GM12878 (cell line): ENCODE measurements at regions of chr1 and their contacts with region 1.

Region 1: DNA sequence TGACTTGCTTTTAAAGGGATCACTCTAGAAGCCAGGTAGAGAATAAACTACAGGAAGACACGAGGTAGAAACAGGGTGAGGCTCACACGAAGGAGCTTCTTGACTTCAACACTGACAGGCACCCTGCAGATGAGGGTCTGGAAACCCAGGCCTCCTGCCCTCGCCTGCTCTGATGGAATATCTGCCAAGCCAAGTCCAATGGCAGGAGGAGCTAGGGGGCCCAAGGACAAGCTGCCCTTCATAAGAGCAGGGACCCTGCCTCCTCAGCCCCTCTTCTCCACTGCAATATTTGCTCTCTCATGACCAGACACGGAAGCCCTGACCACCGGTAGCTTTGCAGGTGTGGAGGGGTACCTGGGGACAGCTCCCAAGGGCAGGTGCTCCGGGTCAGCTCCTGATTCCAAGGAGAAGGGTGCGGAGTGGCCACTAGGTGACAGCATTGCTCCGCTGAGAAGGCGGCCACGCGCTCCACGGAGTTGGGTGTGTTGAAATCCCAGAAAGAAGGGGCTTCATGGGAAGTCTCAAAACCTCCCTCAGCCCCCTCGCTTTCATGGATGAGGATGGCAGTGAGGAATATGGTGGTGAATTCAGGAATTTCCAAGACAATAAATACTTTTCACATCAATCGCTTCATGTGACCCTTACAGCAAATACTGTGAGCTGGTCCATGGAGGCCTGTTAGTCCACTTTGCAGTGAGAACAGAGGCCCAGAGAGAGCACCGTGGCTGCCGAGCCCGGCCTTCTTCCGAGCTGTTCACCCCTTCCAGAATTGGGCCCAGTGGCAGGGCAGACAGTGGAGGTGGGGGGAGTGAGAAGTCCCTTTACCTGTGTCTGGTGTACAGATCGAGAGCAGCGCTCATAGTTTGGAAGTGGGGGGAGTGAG is 33.2 kb upstream of the PAX7 start:
- DNase-seq: no peak
- ATAC-seq: peak; percentile 85
- H3K4me3 ChIP-seq: no peak overlapping the region
- H3K27ac ChIP-seq: no peak overlapping the region
- H3K4me1 ChIP-seq: no peaks in the 10 kb centered on the region
- H3K27me3 ChIP-seq: no peaks in the 10 kb centered on the region; a peak in 1 of 4 replicates
- CTCF ChIP-seq: peak; percentile 80 to 97 (median 94)
- EP300 ChIP-seq: no peak
- POLR2A ChIP-seq: no peak
- RAD21 ChIP-seq: peak; percentile 86

Region 2: GRCh38 chr1:18322368-18323032 is 274.9 kb before region 1 on chr1:
- CTCF ChIA-PET with region 1: no interaction called
- POLR2A ChIA-PET with region 1: no interaction called
- RAD21 ChIA-PET with region 1: no interaction called
- SMC1A ChIA-PET with region 1: no interaction called
- in situ Hi-C with region 1: no loop called
- intact Hi-C with region 1: no loop called
- DNase-seq: no peak
- ATAC-seq: no peak; the same call in 2 of the 3 replicates
- H3K4me3 ChIP-seq: no peak overlapping the region
- H3K27ac ChIP-seq: no peak overlapping the region
- H3K4me1 ChIP-seq: no peaks in the 10 kb centered on the region
- H3K27me3 ChIP-seq: no peaks in the 10 kb centered on the region
- CTCF ChIP-seq: peak; percentile 24 to 55 (median 34)
- EP300 ChIP-seq: no peak
- POLR2A ChIP-seq: no peak
- RAD21 ChIP-seq: 0 out of 2 replicates have a peak, but pooled peaks have one; percentile 7

Region 3: GRCh38 chr1:18668796-18669404 is 71.5 kb after region 1 on chr1:
- CTCF ChIA-PET with region 1: no interaction called
- POLR2A ChIA-PET with region 1: no interaction called
- RAD21 ChIA-PET with region 1: no interaction called
- SMC1A ChIA-PET with region 1: no interaction called
- in situ Hi-C with region 1: no loop called
- intact Hi-C with region 1: no loop called
- DNase-seq: no peak
- ATAC-seq: no peak
- H3K4me3 ChIP-seq: no peak overlapping the region
- H3K27ac ChIP-seq: no peak overlapping the region
- H3K4me1 ChIP-seq: no peaks in the 10 kb centered on the region
- H3K27me3 ChIP-seq: peaks cover 2% of the 10 kb centered on the region in 2 experiments
- CTCF ChIP-seq: no peak
- EP300 ChIP-seq: no peak
- POLR2A ChIP-seq: no peak
- RAD21 ChIP-seq: no peak

Region 4: GRCh38 chr1:18681423-18681835 is 84.0 kb after region 1 on chr1:
- CTCF ChIA-PET with region 1: interaction called, 16 read pairs
- POLR2A ChIA-PET with region 1: no interaction called
- RAD21 ChIA-PET with region 1: no interaction called
- SMC1A ChIA-PET with region 1: no interaction called
- in situ Hi-C with region 1: no loop called
- intact Hi-C with region 1: loop called (anchors 2 kb)
- DNase-seq: no peak
- ATAC-seq: peak; percentile 62
- H3K4me3 ChIP-seq: no peak overlapping the region
- H3K27ac ChIP-seq: no peak overlapping the region
- H3K4me1 ChIP-seq: no peaks in the 10 kb centered on the region
- H3K27me3 ChIP-seq: peaks cover 0 to 3% of the 10 kb centered on the region in 2 experiments; a peak in 2 of 4 replicates
- CTCF ChIP-seq: peak; percentile 53 to 65 (median 58)
- EP300 ChIP-seq: no peak
- POLR2A ChIP-seq: no peak
- RAD21 ChIP-seq: peak; percentile 50

Region 5: GRCh38 chr1:18764362-18764761 is 167.0 kb after region 1 on chr1:
- CTCF ChIA-PET with region 1: no interaction called
- POLR2A ChIA-PET with region 1: no interaction called
- RAD21 ChIA-PET with region 1: no interaction called
- SMC1A ChIA-PET with region 1: no interaction called
- in situ Hi-C with region 1: no loop called
- intact Hi-C with region 1: no loop called
- DNase-seq: no peak
- ATAC-seq: no peak
- H3K4me3 ChIP-seq: no peak overlapping the region
- H3K27ac ChIP-seq: no peak overlapping the region
- H3K4me1 ChIP-seq: no peaks in the 10 kb centered on the region
- H3K27me3 ChIP-seq: peaks cover under 1 to 2% of the 10 kb centered on the region in 2 experiments
- CTCF ChIP-seq: no peak
- EP300 ChIP-seq: no peak
- POLR2A ChIP-seq: no peak
- RAD21 ChIP-seq: no peak

Region 6: GRCh38 chr1:18820791-18821641 is 223.6 kb after region 1 on chr1:
- CTCF ChIA-PET with region 1: interaction called, 13 read pairs
- POLR2A ChIA-PET with region 1: no interaction called
- RAD21 ChIA-PET with region 1: interaction called, 5 read pairs
- SMC1A ChIA-PET with region 1: no interaction called
- in situ Hi-C with region 1: loop called (anchors 5 kb)
- intact Hi-C with region 1: loop called (anchors 1 kb)
- DNase-seq: no peak
- ATAC-seq: peak; percentile 89
- H3K4me3 ChIP-seq: no peak overlapping the region
- H3K27ac ChIP-seq: no peak overlapping the region
- H3K4me1 ChIP-seq: no peaks in the 10 kb centered on the region
- H3K27me3 ChIP-seq: peaks cover 0 to 2% of the 10 kb centered on the region in 2 experiments; a peak in 2 of 4 replicates
- CTCF ChIP-seq: peak; percentile 85 to 97 (median 95); a peak in 5 of 6 replicates
- EP300 ChIP-seq: no peak
- POLR2A ChIP-seq: no peak
- RAD21 ChIP-seq: peak; percentile 69

Region 7: DNA sequence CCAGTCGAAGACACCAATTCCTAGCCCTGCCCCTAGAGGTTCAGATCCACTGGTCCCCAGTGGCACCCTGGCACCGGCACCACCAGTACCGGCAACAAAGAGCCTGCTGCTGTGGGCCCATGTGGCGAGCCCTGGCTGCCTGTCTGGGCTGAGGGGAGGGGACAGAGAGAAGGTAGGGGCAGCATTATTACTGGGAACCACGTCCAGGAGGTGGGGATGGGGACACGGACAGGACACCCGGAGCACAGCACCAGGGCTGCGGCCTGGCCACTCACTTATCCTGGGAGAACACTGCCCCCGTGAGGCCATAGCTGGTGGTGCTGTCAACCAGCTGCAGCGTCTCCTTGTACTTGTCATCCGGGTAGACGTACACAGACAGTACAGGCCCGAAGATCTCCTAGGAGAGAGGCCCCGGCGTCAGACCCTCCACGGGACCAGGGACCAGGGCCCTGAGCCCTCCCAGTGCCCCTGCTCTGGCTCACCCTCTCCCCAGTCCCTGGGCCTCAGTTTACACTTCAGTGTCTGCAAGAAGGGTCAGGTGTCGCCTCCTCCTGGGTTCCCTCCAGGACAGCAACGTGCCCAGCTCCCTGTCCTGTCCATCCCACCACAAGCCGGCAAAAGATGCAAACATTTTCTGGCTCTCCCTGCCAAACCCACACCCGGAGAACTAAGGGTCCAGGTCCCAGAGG is 277.9 kb after region 1 on chr1:
- CTCF ChIA-PET with region 1: interaction called, 14 read pairs
- POLR2A ChIA-PET with region 1: no interaction called
- RAD21 ChIA-PET with region 1: no interaction called
- SMC1A ChIA-PET with region 1: no interaction called
- in situ Hi-C with region 1: no loop called
- intact Hi-C with region 1: loop called (anchors 5 kb)
- DNase-seq: no peak
- ATAC-seq: peak; percentile 93
- H3K4me3 ChIP-seq: no peak overlapping the region
- H3K27ac ChIP-seq: no peak overlapping the region
- H3K4me1 ChIP-seq: no peaks in the 10 kb centered on the region
- H3K27me3 ChIP-seq: no peaks in the 10 kb centered on the region
- CTCF ChIP-seq: peak; percentile 51 to 85 (median 77)
- EP300 ChIP-seq: no peak
- POLR2A ChIP-seq: no peak
- RAD21 ChIP-seq: peak; percentile 48